Activated B cell treated with CpG ODN at 0.5 μM for 24 hours (primary cell): ENCODE measurements at regions of chr3 and their contacts with region 1.

Region 1: GRCh38 chr3:53263903-53264302 is 8.1 kb upstream of the TKT start:
- DNase-seq: no peak
- ATAC-seq: no peak
- H3K4me3 Mint-ChIP-seq: no peak overlapping the region
- H3K27ac Mint-ChIP-seq: no peak overlapping the region
- H3K4me1 Mint-ChIP-seq: no peaks in the 10 kb centered on the region
- H3K27me3 Mint-ChIP-seq: no peaks in the 10 kb centered on the region
- CTCF ChIP-seq: no peak

Region 2: DNA sequence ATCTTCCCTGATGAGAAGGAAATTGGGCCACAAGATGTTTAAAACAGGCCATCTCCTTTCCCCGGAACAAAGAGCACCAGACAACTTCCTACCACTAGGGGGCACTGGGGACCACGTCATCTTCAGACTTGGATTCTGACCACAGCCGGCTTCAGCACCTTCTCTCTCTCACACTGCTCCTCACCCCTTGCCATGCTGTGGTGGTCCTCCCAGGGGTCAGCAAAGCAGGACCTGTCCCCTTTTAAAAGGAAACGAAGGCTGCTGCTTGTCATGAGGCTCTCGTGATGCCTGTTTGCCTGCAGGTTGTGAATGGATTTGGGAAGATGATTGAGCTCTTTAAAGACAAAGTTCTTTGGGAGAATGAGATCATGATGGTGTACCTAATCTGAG is 149.9 kb before region 1 on chr3:
- CTCF ChIA-PET with region 1: no interaction called
- POLR2A ChIA-PET with region 1: no interaction called
- intact Hi-C with region 1: no loop called
- DNase-seq: peak; percentile 62
- ATAC-seq: peak; percentile 96
- H3K4me3 Mint-ChIP-seq: no peak overlapping the region
- H3K27ac Mint-ChIP-seq: no peak overlapping the region
- H3K4me1 Mint-ChIP-seq: no peaks in the 10 kb centered on the region
- H3K27me3 Mint-ChIP-seq: no peaks in the 10 kb centered on the region
- CTCF ChIP-seq: no peak

Region 3: GRCh38 chr3:53149006-53149690 is 114.8 kb before region 1 on chr3:
- CTCF ChIA-PET with region 1: no interaction called
- POLR2A ChIA-PET with region 1: interaction called, 11 read pairs
- intact Hi-C with region 1: no loop called
- DNase-seq: no peak
- ATAC-seq: no peak
- H3K4me3 Mint-ChIP-seq: no peak overlapping the region
- H3K27ac Mint-ChIP-seq: no peak overlapping the region
- H3K4me1 Mint-ChIP-seq: no peaks in the 10 kb centered on the region
- H3K27me3 Mint-ChIP-seq: peaks cover 9% of the 10 kb centered on the region
- CTCF ChIP-seq: no peak

Region 4: GRCh38 chr3:53234563-53235232 is 29.2 kb before region 1 on chr3:
- CTCF ChIA-PET with region 1: no interaction called
- POLR2A ChIA-PET with region 1: interaction called, 10 read pairs
- intact Hi-C with region 1: no loop called
- DNase-seq: no peak
- ATAC-seq: no peak
- H3K4me3 Mint-ChIP-seq: no peak overlapping the region
- H3K27ac Mint-ChIP-seq: no peak overlapping the region
- H3K4me1 Mint-ChIP-seq: no peaks in the 10 kb centered on the region
- H3K27me3 Mint-ChIP-seq: no peaks in the 10 kb centered on the region
- CTCF ChIP-seq: no peak